ENCODE measurements at regions of chr2 and their contacts with region 1.

Region 1: DNA sequence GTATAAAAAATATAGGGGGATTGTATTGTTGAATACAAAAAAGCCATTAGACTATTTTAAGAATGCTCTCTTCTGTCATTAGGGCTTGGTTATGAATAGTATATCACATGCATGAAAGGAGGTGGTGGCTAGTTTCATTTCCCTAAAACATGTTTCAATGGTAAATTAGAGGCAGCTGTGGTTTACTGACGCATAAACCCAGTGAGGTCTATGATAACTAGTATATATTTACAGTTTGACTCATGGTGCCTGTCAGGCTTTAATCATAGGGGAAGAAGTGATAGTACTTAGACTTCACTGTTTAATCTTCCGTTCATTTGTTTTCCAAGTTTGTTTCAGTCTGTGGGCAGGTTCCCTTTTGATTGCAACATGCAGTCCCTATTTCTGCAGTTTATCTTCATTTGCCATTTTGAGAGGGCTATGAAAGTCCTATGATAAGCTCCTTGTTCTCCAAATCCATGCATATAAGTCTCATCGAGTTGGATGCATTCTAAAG is 55.1 kb upstream of the MAP4K3 start:
- DNase-seq: peak; percentile 89
- H3K4me3 ChIP-seq: no peak overlapping the region
- H3K27ac ChIP-seq: no peak overlapping the region
- H3K27me3 ChIP-seq: no peaks in the 10 kb centered on the region
- CTCF ChIP-seq: no peak

Region 2: GRCh38 chr2:39508198-39508597 is 16.1 kb after region 1 on chr2:
- CTCF ChIA-PET with region 1: interaction called, 3 read pairs
- POLR2A ChIA-PET with region 1: interaction called, 11 read pairs
- DNase-seq: peak; percentile 61
- H3K4me3 ChIP-seq: no peak overlapping the region
- H3K27ac ChIP-seq: peak overlapping the region; percentile 48
- H3K27me3 ChIP-seq: no peaks in the 10 kb centered on the region
- CTCF ChIP-seq: no peak

Region 3: DNA sequence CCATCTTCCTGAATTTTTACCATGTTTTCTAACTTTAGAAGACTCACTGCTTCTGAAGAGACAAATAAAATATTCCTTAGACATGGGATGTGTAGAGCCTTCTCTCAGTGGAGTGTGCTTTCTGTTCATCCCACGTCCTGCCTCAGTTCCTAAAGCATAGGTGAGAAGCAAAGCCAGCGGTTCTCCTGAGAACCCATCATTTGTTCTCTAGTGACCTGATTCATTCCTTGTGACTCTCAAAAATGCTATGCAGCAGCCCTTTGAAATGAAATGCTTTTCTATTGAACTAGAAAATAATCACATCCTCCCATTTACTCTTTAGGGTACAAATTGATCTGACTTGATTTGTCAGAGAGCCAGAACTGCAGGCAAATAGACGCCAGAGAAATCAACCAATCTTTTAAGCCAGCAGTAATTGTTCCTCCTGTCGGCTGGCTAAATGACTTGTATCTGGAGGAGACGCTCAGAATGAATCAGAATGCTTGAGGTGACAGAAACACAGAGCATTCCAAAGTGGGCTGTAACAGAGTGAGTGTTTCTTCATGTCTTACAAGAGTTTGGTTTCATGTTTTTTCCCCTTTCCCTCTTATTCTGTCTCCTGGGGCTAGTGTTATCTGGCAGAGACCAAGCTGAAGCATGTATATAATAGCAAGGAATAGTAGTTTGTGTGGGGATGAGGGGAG is 92.3 kb after region 1 on chr2:
- CTCF ChIA-PET with region 1: no interaction called
- POLR2A ChIA-PET with region 1: no interaction called
- DNase-seq: peak; percentile 26
- H3K4me3 ChIP-seq: no peak overlapping the region
- H3K27ac ChIP-seq: no peak overlapping the region
- H3K27me3 ChIP-seq: no peaks in the 10 kb centered on the region
- CTCF ChIP-seq: no peak

Region 4: GRCh38 chr2:39631718-39632117 is 139.6 kb after region 1 on chr2:
- CTCF ChIA-PET with region 1: no interaction called
- POLR2A ChIA-PET with region 1: interaction called, 18 read pairs
- DNase-seq: peak; percentile 68
- H3K4me3 ChIP-seq: no peak overlapping the region
- H3K27ac ChIP-seq: peak overlapping the region; percentile 43
- H3K27me3 ChIP-seq: no peaks in the 10 kb centered on the region
- CTCF ChIP-seq: no peak